ENCODE measurements at regions of chr14 and their contacts with region 1.

Region 1: DNA sequence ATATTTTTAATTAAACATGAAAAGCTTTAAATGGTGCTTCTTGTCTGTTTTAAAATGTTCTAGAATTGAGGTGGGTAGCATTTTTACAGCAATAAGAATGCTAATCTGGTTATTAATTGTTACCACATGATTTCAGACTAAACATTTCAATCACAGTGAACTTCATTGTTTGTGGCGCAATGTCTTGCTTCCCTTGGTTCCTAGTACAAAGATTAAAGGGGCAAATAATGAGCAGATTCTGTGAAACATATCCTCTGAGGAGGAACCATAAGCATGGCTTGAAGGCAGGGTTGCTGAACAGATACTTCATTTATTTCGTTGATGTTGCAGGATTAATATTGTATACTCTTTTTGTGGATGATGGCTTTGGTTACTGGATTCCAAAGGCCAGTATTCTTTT is 162.1 kb downstream of the FUT8 start:
- DNase-seq: no peak
- H3K4me3 ChIP-seq: no peak overlapping the region
- CTCF ChIP-seq: no peak

Region 2: DNA sequence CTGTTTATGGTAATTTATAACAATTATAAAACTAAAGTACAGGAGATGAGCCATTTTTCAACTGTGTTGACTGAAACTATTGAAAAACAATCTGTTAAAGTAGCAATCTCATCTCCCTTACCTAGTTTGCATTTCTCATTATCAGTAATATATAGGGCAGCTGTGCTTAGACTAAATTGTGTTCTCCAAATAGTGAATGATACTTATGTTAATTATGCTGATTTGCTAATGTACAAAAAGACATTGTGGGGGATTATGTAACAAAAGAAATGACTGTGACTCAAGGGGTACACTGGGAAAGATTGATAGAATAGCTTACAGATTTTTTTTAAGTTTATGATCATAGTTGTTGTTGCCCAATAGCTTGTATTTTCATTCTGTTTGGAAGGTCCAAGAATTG is 45.6 kb after region 1 on chr14:
- in situ Hi-C with region 1: loop called (anchors 5 kb)
- DNase-seq: no peak
- H3K4me3 ChIP-seq: no peak overlapping the region
- CTCF ChIP-seq: no peak

Measured in astrocyte of the cerebellum (primary cell).